ENCODE measurements at regions of chr5 and their contacts with region 1.

Region 1: DNA sequence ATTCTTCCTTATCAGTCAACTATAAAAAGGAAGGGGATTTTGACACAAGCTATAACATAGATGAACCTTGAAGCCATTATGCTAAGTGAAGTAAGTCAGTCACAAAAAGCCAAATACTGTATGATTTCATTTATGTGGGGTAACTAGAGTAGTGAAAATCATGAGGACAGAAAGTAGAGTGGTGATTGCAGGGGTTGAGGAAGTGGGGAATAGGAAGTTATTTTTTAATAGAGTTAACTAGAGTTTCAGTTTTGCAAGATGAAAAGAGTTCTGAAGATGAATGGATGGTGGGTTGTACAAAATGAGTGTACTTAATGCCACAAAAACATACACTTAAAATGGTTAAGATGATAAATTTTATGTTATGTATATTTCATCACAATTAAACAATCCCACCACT is 65.4 kb upstream of the FAM174A start:
- DNase-seq: no peak
- H3K4me3 ChIP-seq: no peak overlapping the region
- H3K4me3 Mint-ChIP-seq: no peak overlapping the region
- H3K27ac Mint-ChIP-seq: no peak overlapping the region
- H3K4me1 ChIP-seq: no peaks in the 10 kb centered on the region
- H3K4me1 Mint-ChIP-seq: no peaks in the 10 kb centered on the region
- H3K27me3 ChIP-seq: no peaks in the 10 kb centered on the region
- H3K27me3 Mint-ChIP-seq: peaks cover 3% of the 10 kb centered on the region
- CTCF ChIP-seq: no peak

Region 2: GRCh38 chr5:100313657-100314056 is 156.1 kb before region 1 on chr5:
- CTCF ChIA-PET with region 1: no interaction called
- POLR2A ChIA-PET with region 1: no interaction called
- intact Hi-C with region 1: no loop called
- DNase-seq: no peak
- H3K4me3 ChIP-seq: no peak overlapping the region
- H3K4me3 Mint-ChIP-seq: no peak overlapping the region
- H3K27ac Mint-ChIP-seq: no peak overlapping the region
- H3K4me1 ChIP-seq: no peaks in the 10 kb centered on the region
- H3K4me1 Mint-ChIP-seq: no peaks in the 10 kb centered on the region
- H3K27me3 ChIP-seq: no peaks in the 10 kb centered on the region
- H3K27me3 Mint-ChIP-seq: no peaks in the 10 kb centered on the region
- CTCF ChIP-seq: no peak

Region 3: GRCh38 chr5:100448111-100448528 is 21.6 kb before region 1 on chr5:
- CTCF ChIA-PET with region 1: no interaction called
- POLR2A ChIA-PET with region 1: interaction called, 14 read pairs
- intact Hi-C with region 1: no loop called
- DNase-seq: no peak
- H3K4me3 ChIP-seq: no peak overlapping the region
- H3K4me3 Mint-ChIP-seq: no peak overlapping the region
- H3K27ac Mint-ChIP-seq: no peak overlapping the region
- H3K4me1 ChIP-seq: no peaks in the 10 kb centered on the region
- H3K4me1 Mint-ChIP-seq: no peaks in the 10 kb centered on the region
- H3K27me3 ChIP-seq: no peaks in the 10 kb centered on the region
- H3K27me3 Mint-ChIP-seq: no peaks in the 10 kb centered on the region
- CTCF ChIP-seq: no peak

Region 4: DNA sequence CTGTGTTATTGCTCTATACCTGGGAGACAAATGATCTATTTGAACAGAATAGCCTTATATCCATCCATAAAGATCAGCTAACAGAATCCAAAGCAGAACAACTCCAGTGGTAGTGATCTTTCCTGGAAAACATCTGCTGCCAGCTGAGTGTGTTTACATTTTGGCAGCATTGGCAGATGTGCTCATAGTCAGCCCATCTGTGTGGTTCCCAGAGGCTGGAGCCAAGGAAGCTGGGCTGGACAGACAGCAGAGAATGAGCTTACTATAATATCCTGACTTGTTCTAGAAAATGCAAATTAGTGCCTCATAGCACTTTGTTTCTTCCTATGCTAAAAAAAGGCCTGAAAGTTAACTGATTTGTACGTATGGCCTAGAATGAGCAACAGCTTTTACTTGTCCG is 333.6 kb after region 1 on chr5:
- CTCF ChIA-PET with region 1: no interaction called
- POLR2A ChIA-PET with region 1: no interaction called
- intact Hi-C with region 1: no loop called
- DNase-seq: no peak
- H3K4me3 ChIP-seq: no peak overlapping the region
- H3K4me3 Mint-ChIP-seq: no peak overlapping the region
- H3K27ac Mint-ChIP-seq: no peak overlapping the region
- H3K4me1 ChIP-seq: no peaks in the 10 kb centered on the region
- H3K4me1 Mint-ChIP-seq: no peaks in the 10 kb centered on the region
- H3K27me3 ChIP-seq: no peaks in the 10 kb centered on the region
- H3K27me3 Mint-ChIP-seq: no peaks in the 10 kb centered on the region
- CTCF ChIP-seq: no peak